Endothelial cell of umbilical vein (primary cell): ENCODE measurements at regions of chr12 and their contacts with region 1.

Region 1: GRCh38 chr12:64610149-64610678 is at the start of gene RASSF3:
- DNase-seq: peak; percentile 79
- H3K4me3 ChIP-seq: peak within 1 kb of the TSS; percentile 85 to 92 (median 90)
- H3K27ac ChIP-seq: peak within 1 kb of the TSS; percentile 78
- H3K4me1 ChIP-seq: peaks cover 23% of the 10 kb centered on the region
- H3K27me3 ChIP-seq: no peaks in the 10 kb centered on the region
- CTCF ChIP-seq: no peak
- POLR2A ChIP-seq: peak; percentile 63
- total RNA-seq, gene RASSF3: 60.0 and 60.8 TPM in 2 replicates

Region 2: GRCh38 chr12:64451687-64452558 is 158.3 kb before region 1 on chr12 and contains the start of gene TBK1:
- CTCF ChIA-PET with region 1: no interaction called
- POLR2A ChIA-PET with region 1: no interaction called
- dilution Hi-C with region 1: no loop called
- intact Hi-C with region 1: loop called (anchors 5 kb)
- DNase-seq: peak; percentile 91
- H3K4me3 ChIP-seq: peak within 1 kb of the TSS; percentile 39 to 100 (median 83)
- H3K27ac ChIP-seq: peak within 1 kb of the TSS; percentile 97
- H3K4me1 ChIP-seq: peaks cover 18% of the 10 kb centered on the region
- H3K27me3 ChIP-seq: no peaks in the 10 kb centered on the region
- CTCF ChIP-seq: no peak
- POLR2A ChIP-seq: peak; percentile 82
- total RNA-seq, gene TBK1: 27.7 and 28.9 TPM in 2 replicates

Region 3: GRCh38 chr12:64583771-64584421 is 26.3 kb before region 1 on chr12:
- CTCF ChIA-PET with region 1: interaction called, 10 read pairs
- POLR2A ChIA-PET with region 1: no interaction called
- dilution Hi-C with region 1: no loop called
- intact Hi-C with region 1: loop called (anchors 1 kb)
- DNase-seq: peak; percentile 90
- H3K4me3 ChIP-seq: peak overlapping the region in 1 of 3 experiments; percentile 24
- H3K27ac ChIP-seq: peak overlapping the region; percentile 42
- H3K4me1 ChIP-seq: peaks cover 17% of the 10 kb centered on the region
- H3K27me3 ChIP-seq: peaks cover 0 to 2% of the 10 kb centered on the region in 2 experiments
- CTCF ChIP-seq: no peak
- POLR2A ChIP-seq: no peak

Region 4: GRCh38 chr12:64625243-64626077 is 15.2 kb after region 1 on chr12:
- CTCF ChIA-PET with region 1: interaction called, 7 read pairs
- POLR2A ChIA-PET with region 1: no interaction called
- dilution Hi-C with region 1: no loop called
- intact Hi-C with region 1: loop called (anchors 1 kb)
- DNase-seq: peak; percentile 96
- H3K4me3 ChIP-seq: peak overlapping the region in 2 of 3 experiments; percentile 11 to 39
- H3K27ac ChIP-seq: peak overlapping the region; percentile 89
- H3K4me1 ChIP-seq: peaks cover 65% of the 10 kb centered on the region
- H3K27me3 ChIP-seq: no peaks in the 10 kb centered on the region
- CTCF ChIP-seq: no peak
- POLR2A ChIP-seq: peak; percentile 36

Region 5: GRCh38 chr12:64669270-64669842 is 59.1 kb after region 1 on chr12:
- CTCF ChIA-PET with region 1: interaction called, 9 read pairs
- POLR2A ChIA-PET with region 1: no interaction called
- dilution Hi-C with region 1: no loop called
- intact Hi-C with region 1: loop called (anchors 1 kb)
- DNase-seq: peak; percentile 81
- H3K4me3 ChIP-seq: peak overlapping the region in 2 of 3 experiments; percentile 2 to 7
- H3K27ac ChIP-seq: peak overlapping the region; percentile 17
- H3K4me1 ChIP-seq: peaks cover 78% of the 10 kb centered on the region
- H3K27me3 ChIP-seq: no peaks in the 10 kb centered on the region
- CTCF ChIP-seq: no peak
- POLR2A ChIP-seq: no peak

Region 6: GRCh38 chr12:64679487-64679983 is 69.3 kb after region 1 on chr12:
- CTCF ChIA-PET with region 1: interaction called, 4 read pairs
- POLR2A ChIA-PET with region 1: interaction called, 3 read pairs
- dilution Hi-C with region 1: no loop called
- intact Hi-C with region 1: loop called (anchors 1 kb)
- DNase-seq: peak; percentile 92
- H3K4me3 ChIP-seq: peak overlapping the region in 2 of 3 experiments; percentile 6 to 13
- H3K27ac ChIP-seq: peak overlapping the region; percentile 93
- H3K4me1 ChIP-seq: peaks cover 62% of the 10 kb centered on the region
- H3K27me3 ChIP-seq: no peaks in the 10 kb centered on the region
- CTCF ChIP-seq: no peak
- POLR2A ChIP-seq: peak; percentile 45

Region 7: DNA sequence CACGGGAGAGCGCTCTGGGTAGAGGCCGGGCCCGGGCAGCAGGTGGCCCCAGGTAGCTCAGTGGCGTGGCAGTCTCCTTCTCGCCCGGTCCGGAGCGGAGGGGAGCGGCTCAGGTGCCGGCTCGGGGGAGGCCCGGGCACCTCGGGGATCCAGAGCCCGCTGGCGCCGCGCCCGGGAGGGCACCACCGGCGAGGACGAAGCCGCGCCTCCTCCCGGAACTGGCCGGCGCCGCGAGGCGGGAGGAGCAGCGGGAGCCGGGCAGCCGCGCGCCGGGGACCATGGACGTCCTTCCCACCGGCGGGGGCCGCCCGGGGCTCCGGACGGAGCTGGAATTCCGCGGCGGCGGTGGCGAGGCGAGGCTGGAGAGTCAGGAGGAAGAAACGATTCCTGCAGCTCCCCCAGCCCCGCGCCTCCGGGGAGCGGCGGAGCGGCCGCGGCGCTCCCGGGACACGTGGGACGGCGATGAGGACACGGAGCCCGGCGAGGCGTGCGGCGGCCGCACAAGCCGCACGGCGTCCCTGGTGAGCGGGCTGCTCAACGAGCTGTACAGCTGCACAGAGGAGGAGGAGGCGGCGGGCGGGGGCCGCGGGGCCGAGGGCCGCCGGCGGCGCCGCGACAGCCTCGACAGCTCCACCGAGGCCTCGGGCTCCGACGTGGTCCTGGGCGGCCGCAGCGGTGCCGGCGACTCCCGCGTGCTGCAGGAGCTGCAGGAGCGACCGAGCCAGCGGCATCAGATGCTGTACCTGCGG is 170.5 kb after region 1 on chr12:
- CTCF ChIA-PET with region 1: no interaction called
- POLR2A ChIA-PET with region 1: no interaction called
- dilution Hi-C with region 1: no loop called
- intact Hi-C with region 1: loop called (anchors 5 kb)
- DNase-seq: peak; percentile 43
- H3K4me3 ChIP-seq: peak overlapping the region; percentile 23 to 64 (median 49)
- H3K27ac ChIP-seq: no peak overlapping the region
- H3K4me1 ChIP-seq: peaks cover 16% of the 10 kb centered on the region
- H3K27me3 ChIP-seq: peaks cover 4 to 19% of the 10 kb centered on the region in 2 experiments
- CTCF ChIP-seq: no peak
- POLR2A ChIP-seq: no peak